ENCODE measurements at regions of chr15 and their contacts with region 1.

Region 1: GRCh38 chr15:42373274-42373673 is 14.0 kb downstream of the CAPN3 start:
- DNase-seq: no peak
- CTCF ChIP-seq: no peak

Region 2: DNA sequence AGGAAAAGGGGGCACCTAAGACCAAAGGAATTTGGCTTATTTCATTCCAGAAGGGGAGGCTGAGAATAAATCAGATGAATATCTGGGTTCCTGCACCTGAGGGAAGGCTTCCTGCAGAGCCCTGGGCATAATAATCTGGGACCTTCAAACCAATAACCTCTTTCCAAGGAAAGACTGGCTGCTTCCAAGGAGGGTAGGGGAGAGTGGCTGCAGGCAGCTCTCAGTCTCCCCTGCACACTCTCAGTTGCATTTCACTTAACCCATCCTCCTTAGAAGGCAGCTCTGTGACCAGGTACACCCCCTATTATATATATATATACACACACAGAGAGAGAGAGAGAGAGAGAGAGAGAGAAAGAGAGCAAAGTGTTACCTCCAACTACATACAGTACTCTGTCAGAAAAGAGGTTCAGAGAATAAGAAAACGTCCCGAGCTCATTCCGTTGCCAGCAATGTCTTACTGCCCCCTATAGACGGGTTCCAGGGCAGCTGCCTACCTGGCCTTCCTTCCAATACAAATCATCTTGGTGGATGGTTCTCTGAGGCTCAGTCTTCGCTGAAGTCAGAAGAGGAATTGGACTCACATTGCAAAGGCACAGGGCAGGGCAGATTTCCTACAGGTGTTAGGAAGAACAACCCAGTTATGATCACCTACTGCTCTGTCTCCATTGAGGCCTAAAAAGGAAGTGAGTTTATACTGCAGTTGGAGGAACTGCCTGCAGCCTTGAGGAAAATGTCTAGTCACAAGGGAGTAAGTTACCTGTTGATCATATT is 12.1 kb after region 1 on chr15:
- CTCF ChIA-PET with region 1: interaction called, 13 read pairs
- POLR2A ChIA-PET with region 1: no interaction called
- DNase-seq: peak; percentile 54
- CTCF ChIP-seq: peak; percentile 64

Measured in GM10248 (cell line).